Psoas muscle (tissue), 8 donors: ENCODE measurements at regions of chr10 and their contacts with region 1.

Region 1: GRCh38 chr10:60652628-60653027 is 125.7 kb upstream of the CDK1 start:
- DNase-seq: no peak
- ATAC-seq: no peak
- H3K4me3 ChIP-seq: no peak overlapping the region
- H3K27ac ChIP-seq: no peak overlapping the region
- H3K4me1 ChIP-seq: no peaks in the 10 kb centered on the region
- H3K27me3 ChIP-seq: no peaks in the 10 kb centered on the region
- CTCF ChIP-seq: no peak

Region 2: GRCh38 chr10:60237977-60238758 is 414.5 kb before region 1 on chr10:
- intact Hi-C with region 1: loop called in 1 of 2 experiments (anchors 10 kb)
- DNase-seq: no peak
- ATAC-seq: peak; percentile 56 to 71 (median 67)
- H3K4me3 ChIP-seq: no peak overlapping the region
- H3K27ac ChIP-seq: no peak overlapping the region
- H3K4me1 ChIP-seq: no peaks in the 10 kb centered on the region
- H3K27me3 ChIP-seq: no peaks in the 10 kb centered on the region
- CTCF ChIP-seq: peak; percentile 25